PC-9 (cell line): ENCODE measurements at regions of chr12 and their contacts with region 1.

Region 1: GRCh38 chr12:45990468-45991283 is at the start of gene SCAF11:
- DNase-seq: peak; percentile 98 to 100
- H3K4me3 ChIP-seq: peak within 1 kb of the TSS; percentile 94
- H3K27ac ChIP-seq: peak within 1 kb of the TSS; percentile 94
- H3K4me1 ChIP-seq: peaks cover 36% of the 10 kb centered on the region
- H3K27me3 ChIP-seq: no peaks in the 10 kb centered on the region
- CTCF ChIP-seq: peak; percentile 92
- total RNA-seq, gene SCAF11: 95.5 and 98.7 TPM in 2 replicates

Region 2: GRCh38 chr12:45446008-45446407 is 544.7 kb before region 1 on chr12:
- CTCF ChIA-PET with region 1: no interaction called
- POLR2A ChIA-PET with region 1: no interaction called
- intact Hi-C with region 1: no loop called
- DNase-seq: no peak
- H3K4me3 ChIP-seq: no peak overlapping the region
- H3K27ac ChIP-seq: no peak overlapping the region
- H3K4me1 ChIP-seq: no peaks in the 10 kb centered on the region
- H3K27me3 ChIP-seq: no peaks in the 10 kb centered on the region
- CTCF ChIP-seq: no peak

Region 3: GRCh38 chr12:46071769-46072624 is 81.3 kb after region 1 on chr12:
- CTCF ChIA-PET with region 1: no interaction called
- POLR2A ChIA-PET with region 1: no interaction called
- intact Hi-C with region 1: loop called (anchors 1 kb)
- DNase-seq: peak; percentile 56 to 69
- H3K4me3 ChIP-seq: no peak overlapping the region
- H3K27ac ChIP-seq: no peak overlapping the region
- H3K4me1 ChIP-seq: no peaks in the 10 kb centered on the region
- H3K27me3 ChIP-seq: no peaks in the 10 kb centered on the region
- CTCF ChIP-seq: peak; percentile 90

Region 4: DNA sequence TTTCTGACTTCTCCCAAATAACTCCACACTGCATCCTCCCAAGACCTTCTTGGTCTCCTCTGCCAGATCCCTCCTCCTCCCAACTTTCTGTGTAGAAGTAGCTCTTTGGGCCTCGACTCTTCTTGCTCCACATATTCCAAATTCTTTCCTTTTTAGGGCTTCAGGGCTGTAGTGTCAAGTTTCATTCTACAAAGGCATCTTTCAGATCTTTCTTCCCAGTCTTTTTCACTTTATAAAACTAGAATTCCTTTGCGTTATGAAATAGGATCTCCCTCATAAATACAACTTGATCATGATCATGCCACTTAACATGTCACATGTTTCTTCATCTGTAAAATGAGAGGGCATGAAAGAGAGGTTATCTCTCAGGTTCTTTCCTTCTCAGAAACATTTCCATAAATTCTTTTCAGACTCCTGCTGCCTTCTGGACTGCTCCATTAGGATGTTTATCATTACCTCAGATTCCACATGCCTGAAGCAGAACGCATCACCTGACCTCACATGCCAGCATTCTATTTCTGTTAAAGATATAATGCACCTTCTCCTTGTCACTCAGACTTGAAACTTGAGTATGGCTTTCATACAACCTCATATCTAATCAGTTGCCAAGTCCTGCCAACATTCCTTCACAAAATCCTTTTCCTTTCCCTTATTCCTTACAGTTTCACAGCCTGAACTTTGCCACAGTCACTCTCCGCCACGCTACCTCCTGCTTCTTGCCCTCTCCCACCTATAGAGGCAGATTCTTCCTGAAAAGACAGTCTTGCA is 269.7 kb after region 1 on chr12:
- CTCF ChIA-PET with region 1: no interaction called
- POLR2A ChIA-PET with region 1: interaction called, 3 read pairs
- intact Hi-C with region 1: loop called (anchors 2 kb)
- DNase-seq: peak; percentile 39 to 75
- H3K4me3 ChIP-seq: peak overlapping the region; percentile 37
- H3K27ac ChIP-seq: peak overlapping the region; percentile 92
- H3K4me1 ChIP-seq: peaks cover 65% of the 10 kb centered on the region
- H3K27me3 ChIP-seq: no peaks in the 10 kb centered on the region
- CTCF ChIP-seq: no peak

Region 5: DNA sequence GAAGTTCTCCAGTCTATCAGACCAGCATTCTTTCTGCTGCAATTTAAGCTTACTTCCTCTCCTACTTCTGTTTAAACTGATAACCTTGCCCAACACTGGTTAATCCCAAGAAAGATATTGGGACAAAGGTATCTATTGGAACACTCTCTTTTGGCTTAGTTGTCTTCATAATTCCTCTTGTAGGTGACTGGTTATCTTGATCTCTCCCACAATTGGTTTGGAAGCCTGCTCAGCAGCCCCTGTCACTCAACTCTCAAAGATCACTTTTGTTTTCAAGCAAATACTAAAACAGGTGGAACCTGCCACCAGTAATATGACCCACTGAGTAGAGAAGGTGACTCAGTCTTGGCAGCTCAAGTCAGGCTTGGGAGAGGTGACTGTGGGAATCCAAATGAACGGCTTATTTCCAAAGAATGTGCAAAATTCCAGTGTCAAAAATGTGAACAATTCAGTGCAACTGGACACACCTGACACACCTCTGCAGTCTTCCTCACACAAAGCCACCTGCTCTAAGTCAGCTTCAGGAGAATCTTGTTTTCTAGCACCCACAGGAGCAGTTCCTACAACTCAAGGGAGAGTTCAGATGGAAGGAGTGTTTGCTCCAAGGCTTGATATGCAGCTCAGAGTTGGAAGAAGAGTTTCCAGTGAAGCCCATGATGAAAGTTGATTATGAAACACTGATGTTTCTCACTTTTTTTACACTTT is 465.1 kb after region 1 on chr12:
- CTCF ChIA-PET with region 1: no interaction called
- POLR2A ChIA-PET with region 1: no interaction called
- intact Hi-C with region 1: loop called (anchors 2 kb)
- DNase-seq: peak; percentile 78 to 100
- H3K4me3 ChIP-seq: peak overlapping the region; percentile 38; the same call in 1 of the 2 replicates
- H3K27ac ChIP-seq: peak overlapping the region; percentile 99
- H3K4me1 ChIP-seq: peaks cover 65% of the 10 kb centered on the region
- H3K27me3 ChIP-seq: no peaks in the 10 kb centered on the region
- CTCF ChIP-seq: no peak

Region 6: DNA sequence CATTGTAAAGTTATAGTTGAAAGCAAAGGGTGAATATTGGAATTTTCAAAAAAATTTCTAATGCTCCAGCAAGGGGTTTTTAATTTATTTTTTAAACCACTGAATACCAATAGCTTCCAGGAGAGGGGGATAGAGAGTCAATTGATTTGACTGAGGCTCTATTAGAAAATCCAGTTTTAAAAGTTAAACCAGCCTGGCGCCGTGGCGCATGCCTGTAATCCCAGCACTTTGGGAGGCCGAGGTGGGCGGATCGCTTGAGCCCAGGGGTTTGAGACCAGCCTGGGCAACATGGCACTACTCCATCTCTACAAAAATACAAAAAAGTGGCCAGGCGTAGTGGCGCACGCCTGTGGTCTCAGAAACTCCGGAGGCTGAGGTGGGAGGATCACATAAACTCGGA is 685.1 kb after region 1 on chr12:
- CTCF ChIA-PET with region 1: no interaction called
- POLR2A ChIA-PET with region 1: no interaction called
- intact Hi-C with region 1: loop called (anchors 5 kb)
- DNase-seq: no peak
- H3K4me3 ChIP-seq: no peak overlapping the region
- H3K27ac ChIP-seq: no peak overlapping the region
- H3K4me1 ChIP-seq: peaks cover 26% of the 10 kb centered on the region; the same call in 1 of the 2 replicates
- H3K27me3 ChIP-seq: no peaks in the 10 kb centered on the region
- CTCF ChIP-seq: peak; percentile 76

Region 7: DNA sequence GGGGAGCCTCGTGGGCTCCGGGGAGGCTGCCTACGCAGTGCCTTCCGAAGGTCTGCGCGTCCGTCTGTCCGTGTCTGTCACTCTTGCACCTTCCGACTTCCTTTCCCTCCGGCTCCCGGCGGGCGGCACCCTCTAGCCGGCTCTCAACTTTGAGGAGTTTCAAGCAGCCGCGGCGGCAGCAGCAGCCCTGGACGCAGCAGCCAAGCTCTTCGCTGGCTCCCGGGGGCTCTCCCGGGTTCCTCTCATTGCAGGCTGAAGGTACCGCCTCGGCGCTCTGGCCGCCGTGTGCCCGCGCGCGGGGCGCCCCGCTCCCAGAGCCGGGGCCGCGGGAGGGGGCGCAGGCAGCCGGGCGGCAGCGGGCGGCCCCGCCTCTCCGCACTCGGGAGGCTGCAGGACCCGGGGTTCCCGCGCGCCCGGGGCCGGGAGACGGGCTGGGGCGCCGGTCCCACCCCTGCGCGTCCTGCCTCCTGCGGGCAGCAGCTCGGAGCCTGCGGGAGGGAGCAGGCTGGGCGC is 1088.8 kb after region 1 on chr12 and contains the starts of genes AMIGO2 and PCED1B:
- CTCF ChIA-PET with region 1: no interaction called
- POLR2A ChIA-PET with region 1: interaction called, 6 read pairs
- intact Hi-C with region 1: loop called (anchors 5 kb)
- DNase-seq: peak; percentile 46 to 58
- H3K4me3 ChIP-seq: peak within 1 kb of the TSS; percentile 96
- H3K27ac ChIP-seq: peak within 1 kb of the TSS; percentile 98
- H3K4me1 ChIP-seq: peaks cover 50% of the 10 kb centered on the region
- H3K27me3 ChIP-seq: no peaks in the 10 kb centered on the region
- CTCF ChIP-seq: peak; percentile 26; the same call in 1 of the 2 replicates
- total RNA-seq, gene AMIGO2: 41.9 and 46.3 TPM in 2 replicates
- total RNA-seq, gene PCED1B: 10.9 and 11.2 TPM in 2 replicates